ENCODE measurements at regions of chr6 and their contacts with region 1.

Region 1: DNA sequence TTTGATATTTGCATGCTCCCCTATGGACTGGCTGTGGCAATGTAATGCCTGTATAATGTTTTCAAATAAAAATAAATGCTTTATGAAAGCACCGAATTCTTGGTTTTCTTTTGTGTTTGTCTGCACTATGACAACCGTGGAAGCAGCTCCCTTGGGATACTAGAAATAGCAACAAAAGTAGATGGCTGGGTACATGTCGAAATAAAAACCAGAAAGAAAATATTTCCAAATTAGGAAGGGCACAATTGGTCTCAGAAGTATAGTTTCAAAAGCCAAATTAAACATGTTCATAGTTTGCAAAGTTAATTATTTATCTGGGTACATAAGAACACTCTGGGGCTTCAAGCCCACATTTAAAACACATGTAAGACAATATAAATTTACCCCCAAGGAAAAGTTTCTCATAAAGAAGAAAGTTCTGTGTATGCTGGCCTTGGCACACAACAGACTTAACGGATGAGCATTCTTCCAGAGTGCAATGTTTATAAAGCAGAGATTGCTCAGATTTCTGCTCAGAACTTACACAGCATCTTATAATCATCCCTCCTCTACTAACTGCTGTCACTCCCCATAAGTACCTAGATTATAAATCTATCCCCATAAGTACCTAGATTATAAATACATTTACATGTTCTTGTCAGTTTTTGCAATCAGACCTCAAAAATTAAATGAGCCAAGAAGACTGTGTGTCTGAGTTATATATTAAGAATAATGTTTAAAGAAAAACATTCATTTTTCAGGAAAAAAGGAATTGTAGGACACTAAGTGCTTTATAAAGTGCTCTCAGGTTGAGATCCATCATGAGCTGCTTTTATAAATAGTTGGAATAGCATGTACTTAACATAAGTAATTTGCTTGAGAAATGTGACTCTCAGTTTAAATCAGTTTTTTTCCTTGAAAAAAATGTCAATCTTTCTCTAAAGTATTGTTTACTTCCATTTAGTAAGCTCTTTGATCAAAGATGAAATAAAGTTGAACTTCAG is 230.2 kb upstream of the PLN start:
- DNase-seq: no peak
- ATAC-seq: peak; percentile 20 to 64 (median 34)
- H3K4me3 ChIP-seq: peak overlapping the region in 1 of 12 donors; percentile 2
- H3K27ac ChIP-seq: peak overlapping the region; percentile 22 to 84 (median 66)
- H3K4me1 ChIP-seq: peaks cover 4 to 67% (median 19%) of the 10 kb centered on the region in 12 donors
- H3K27me3 ChIP-seq: no peaks in the 10 kb centered on the region
- CTCF ChIP-seq: no peak
- POLR2A ChIP-seq: no peak

Region 2: GRCh38 chr6:118240878-118241528 is 76.9 kb before region 1 on chr6:
- intact Hi-C with region 1: no loop called
- DNase-seq: no peak
- ATAC-seq: no peak
- H3K4me3 ChIP-seq: no peak overlapping the region
- H3K27ac ChIP-seq: no peak overlapping the region
- H3K4me1 ChIP-seq: no peaks in the 10 kb centered on the region
- H3K27me3 ChIP-seq: no peaks in the 10 kb centered on the region
- CTCF ChIP-seq: no peak
- POLR2A ChIP-seq: no peak

Region 3: DNA sequence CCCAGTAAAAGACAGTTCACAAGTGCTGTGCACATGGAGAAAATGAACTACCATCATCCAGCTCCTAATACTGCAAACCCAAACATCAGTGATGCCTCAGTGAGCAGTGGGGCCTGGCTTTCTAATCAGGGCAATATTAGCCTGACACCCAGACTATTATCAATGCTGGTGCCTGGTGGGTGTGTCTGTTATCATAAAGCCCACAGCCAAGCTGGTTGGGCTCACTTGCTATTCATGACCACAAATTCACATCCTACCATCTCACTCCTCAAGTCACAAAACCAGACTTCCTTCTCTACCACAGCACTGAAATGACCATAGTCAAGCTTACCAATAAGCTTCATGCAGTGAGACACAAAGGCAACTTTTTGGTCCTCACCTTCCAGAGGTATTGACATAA is 49.4 kb after region 1 on chr6:
- intact Hi-C with region 1: loop called in 1 of 10 experiments (anchors 5 kb)
- DNase-seq: no peak
- ATAC-seq: no peak
- H3K4me3 ChIP-seq: no peak overlapping the region
- H3K27ac ChIP-seq: peak overlapping the region in 1 of 12 donors; percentile 25
- H3K4me1 ChIP-seq: peaks cover 0 to 16% (median 5%) of the 10 kb centered on the region in 12 donors
- H3K27me3 ChIP-seq: no peaks in the 10 kb centered on the region
- CTCF ChIP-seq: no peak
- POLR2A ChIP-seq: no peak

Measured in heart left ventricle (tissue), 16 donors.